CD8-positive, alpha-beta T cell (primary cell): ENCODE measurements at regions of chr7 and their contacts with region 1.

Region 1: GRCh38 chr7:7505915-7506314 is 29.8 kb downstream of the COL28A1 start:
- DNase-seq: no peak
- ATAC-seq: no peak
- H3K4me3 ChIP-seq: no peak overlapping the region
- H3K4me3 Mint-ChIP-seq: no peak overlapping the region
- H3K27ac ChIP-seq: no peak overlapping the region
- H3K27ac Mint-ChIP-seq: no peak overlapping the region
- H3K4me1 ChIP-seq: no peaks in the 10 kb centered on the region
- H3K4me1 Mint-ChIP-seq: no peaks in the 10 kb centered on the region
- H3K27me3 ChIP-seq: no peaks in the 10 kb centered on the region
- H3K27me3 Mint-ChIP-seq: no peaks in the 10 kb centered on the region
- CTCF ChIP-seq: no peak

Region 2: DNA sequence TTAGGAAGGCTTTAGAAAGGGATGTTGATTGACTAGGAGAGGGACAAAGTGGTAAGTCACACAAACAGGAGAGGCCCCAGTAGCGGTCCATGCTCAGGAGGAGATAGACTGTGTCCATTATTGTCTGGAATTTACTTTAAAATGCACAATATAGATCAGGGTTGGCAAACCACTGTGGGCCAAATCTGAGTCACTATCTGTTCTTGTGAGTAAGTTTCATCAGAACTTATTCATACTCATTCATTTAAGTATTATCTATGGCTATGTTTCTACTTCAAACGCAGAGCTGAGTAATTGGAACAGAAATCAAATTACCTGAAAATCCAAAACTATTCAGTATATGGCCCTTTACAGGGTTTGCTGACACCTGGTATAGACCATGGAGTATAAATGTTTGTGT is 136.8 kb before region 1 on chr7:
- CTCF ChIA-PET with region 1: no interaction called
- POLR2A ChIA-PET with region 1: no interaction called
- intact Hi-C with region 1: no loop called
- DNase-seq: no peak
- ATAC-seq: no peak
- H3K4me3 ChIP-seq: no peak overlapping the region
- H3K4me3 Mint-ChIP-seq: no peak overlapping the region
- H3K27ac ChIP-seq: no peak overlapping the region
- H3K27ac Mint-ChIP-seq: no peak overlapping the region
- H3K4me1 ChIP-seq: no peaks in the 10 kb centered on the region
- H3K4me1 Mint-ChIP-seq: no peaks in the 10 kb centered on the region
- H3K27me3 ChIP-seq: no peaks in the 10 kb centered on the region
- H3K27me3 Mint-ChIP-seq: no peaks in the 10 kb centered on the region
- CTCF ChIP-seq: no peak

Region 3: DNA sequence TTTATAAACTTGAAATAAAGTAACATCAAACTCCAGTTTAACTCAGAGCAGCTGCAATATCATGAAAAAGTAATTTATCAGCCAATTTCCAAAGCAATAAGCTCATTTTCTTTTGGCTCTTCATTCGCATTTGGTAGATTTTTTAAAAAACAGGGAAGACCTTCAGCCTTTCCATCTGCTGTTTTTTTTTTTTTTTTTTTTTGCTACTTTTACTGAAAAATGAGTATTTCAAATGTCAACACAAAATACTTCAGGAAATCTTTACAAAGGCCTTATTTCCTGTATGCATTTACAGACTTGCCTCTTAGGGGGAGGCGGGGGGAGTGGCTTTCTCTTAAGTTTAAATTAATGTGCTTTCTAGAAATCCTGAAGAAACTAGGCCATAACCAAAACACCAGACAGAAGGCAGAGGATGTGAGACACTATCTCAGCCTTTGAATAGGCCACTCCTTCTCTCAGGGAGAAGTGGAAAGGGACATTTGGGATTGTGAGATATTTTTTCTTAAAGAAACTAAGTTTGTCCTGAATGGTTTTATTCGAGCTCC is 62.0 kb before region 1 on chr7:
- CTCF ChIA-PET with region 1: no interaction called
- POLR2A ChIA-PET with region 1: no interaction called
- intact Hi-C with region 1: loop called in 1 of 2 experiments (anchors 10 kb)
- DNase-seq: peak in 1 of 9 experiments; percentile 14
- ATAC-seq: no peak
- H3K4me3 ChIP-seq: no peak overlapping the region
- H3K4me3 Mint-ChIP-seq: no peak overlapping the region
- H3K27ac ChIP-seq: no peak overlapping the region
- H3K27ac Mint-ChIP-seq: peak overlapping the region; percentile 46
- H3K4me1 ChIP-seq: no peaks in the 10 kb centered on the region
- H3K4me1 Mint-ChIP-seq: peaks cover 11% of the 10 kb centered on the region
- H3K27me3 ChIP-seq: no peaks in the 10 kb centered on the region
- H3K27me3 Mint-ChIP-seq: peaks cover 4% of the 10 kb centered on the region
- CTCF ChIP-seq: no peak